CD4-positive, alpha-beta T cell (primary cell): ENCODE measurements at regions of chr6 and their contacts with region 1.

Region 1: GRCh38 chr6:118800394-118801071 is 93.4 kb upstream of the ASF1A start:
- DNase-seq: peak; percentile 66 to 94 (median 78)
- ATAC-seq: peak; percentile 92
- H3K4me3 ChIP-seq: peak overlapping the region; percentile 11
- H3K4me3 Mint-ChIP-seq: peak overlapping the region; percentile 71
- H3K27ac ChIP-seq: peak overlapping the region; percentile 7
- H3K27ac Mint-ChIP-seq: peak overlapping the region; percentile 83
- H3K4me1 ChIP-seq: peaks cover 32% of the 10 kb centered on the region
- H3K4me1 Mint-ChIP-seq: peaks cover 48% of the 10 kb centered on the region
- H3K27me3 ChIP-seq: no peaks in the 10 kb centered on the region
- H3K27me3 Mint-ChIP-seq: no peaks in the 10 kb centered on the region
- CTCF ChIP-seq: peak; percentile 83

Region 2: DNA sequence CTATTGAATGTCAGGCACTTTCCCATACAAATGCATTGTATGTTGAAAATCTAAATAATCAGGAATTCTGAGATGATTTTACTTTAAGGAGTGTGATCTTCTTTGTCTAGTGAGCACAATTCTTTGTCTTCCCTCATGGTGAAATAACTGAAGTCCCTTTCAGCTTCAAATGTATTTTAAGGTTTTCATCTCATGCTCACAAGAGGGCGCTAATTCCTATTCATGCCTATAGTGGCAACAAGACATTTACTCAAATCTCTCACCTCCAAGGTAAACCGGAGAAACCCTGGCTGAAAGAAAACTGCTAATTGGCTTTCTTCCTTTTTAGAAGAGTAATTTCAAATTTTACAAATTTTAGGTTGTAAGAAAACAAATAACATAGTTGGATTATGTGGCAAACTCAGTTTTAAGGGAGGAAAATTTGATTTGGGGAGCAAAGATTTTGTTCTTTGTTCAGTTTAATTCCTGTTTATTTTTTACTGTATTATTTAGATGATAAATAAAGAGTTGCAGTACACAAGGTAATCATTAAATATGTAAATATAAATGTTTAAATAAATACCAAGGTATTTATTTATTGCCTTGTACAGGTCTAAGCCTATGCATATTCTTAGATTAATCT is 824.4 kb before region 1 on chr6:
- CTCF ChIA-PET with region 1: no interaction called
- POLR2A ChIA-PET with region 1: no interaction called
- intact Hi-C with region 1: loop called in 1 of 2 experiments (anchors 10 kb)
- DNase-seq: peak in 3 of 14 experiments; percentile 44 to 52 (median 52)
- ATAC-seq: no peak
- H3K4me3 ChIP-seq: no peak overlapping the region
- H3K4me3 Mint-ChIP-seq: no peak overlapping the region
- H3K27ac ChIP-seq: no peak overlapping the region
- H3K27ac Mint-ChIP-seq: no peak overlapping the region
- H3K4me1 ChIP-seq: no peaks in the 10 kb centered on the region
- H3K4me1 Mint-ChIP-seq: no peaks in the 10 kb centered on the region
- H3K27me3 ChIP-seq: no peaks in the 10 kb centered on the region
- H3K27me3 Mint-ChIP-seq: peaks cover 19% of the 10 kb centered on the region
- CTCF ChIP-seq: peak; percentile 71

Region 3: DNA sequence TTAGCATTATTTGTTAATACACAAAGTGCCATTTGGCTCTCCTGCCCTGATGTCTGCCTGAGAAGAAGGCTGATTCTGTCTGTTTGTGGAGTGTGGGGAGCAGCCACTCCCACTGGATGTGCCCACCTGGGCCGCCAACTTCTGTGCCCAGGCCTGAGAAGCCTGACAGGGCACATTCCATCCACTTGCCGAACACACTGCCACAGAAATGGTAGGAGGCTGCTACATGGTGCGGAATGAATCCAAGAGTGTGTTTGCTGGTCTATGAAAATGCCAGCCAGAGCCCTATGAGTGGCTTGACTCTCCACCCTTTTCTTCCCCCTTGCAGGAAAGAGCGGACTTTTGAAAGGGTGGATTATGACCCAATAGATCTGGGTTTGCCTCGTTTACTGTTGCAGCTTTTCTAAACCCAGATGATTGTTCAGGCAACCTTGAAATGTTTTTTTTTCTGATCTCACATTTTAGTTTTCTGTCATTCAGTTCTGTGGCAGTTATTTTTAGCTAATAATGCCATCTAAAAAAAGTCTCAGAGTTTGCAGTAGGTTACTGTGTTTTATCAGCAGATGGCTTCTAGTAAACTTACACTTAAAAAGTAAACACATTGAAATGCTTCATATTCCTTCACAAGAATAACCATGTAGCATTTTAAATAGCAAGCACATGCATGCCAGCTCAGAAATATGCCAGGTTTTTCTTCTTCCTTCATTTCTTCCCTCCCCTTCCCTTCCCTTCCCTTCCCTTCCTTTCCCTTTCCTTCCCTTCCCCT is 697.0 kb before region 1 on chr6:
- CTCF ChIA-PET with region 1: no interaction called
- POLR2A ChIA-PET with region 1: no interaction called
- intact Hi-C with region 1: no loop called
- DNase-seq: no peak
- ATAC-seq: no peak
- H3K4me3 ChIP-seq: no peak overlapping the region
- H3K4me3 Mint-ChIP-seq: no peak overlapping the region
- H3K27ac ChIP-seq: no peak overlapping the region
- H3K27ac Mint-ChIP-seq: no peak overlapping the region
- H3K4me1 ChIP-seq: no peaks in the 10 kb centered on the region
- H3K4me1 Mint-ChIP-seq: no peaks in the 10 kb centered on the region
- H3K27me3 ChIP-seq: no peaks in the 10 kb centered on the region
- H3K27me3 Mint-ChIP-seq: no peaks in the 10 kb centered on the region
- CTCF ChIP-seq: no peak

Region 4: DNA sequence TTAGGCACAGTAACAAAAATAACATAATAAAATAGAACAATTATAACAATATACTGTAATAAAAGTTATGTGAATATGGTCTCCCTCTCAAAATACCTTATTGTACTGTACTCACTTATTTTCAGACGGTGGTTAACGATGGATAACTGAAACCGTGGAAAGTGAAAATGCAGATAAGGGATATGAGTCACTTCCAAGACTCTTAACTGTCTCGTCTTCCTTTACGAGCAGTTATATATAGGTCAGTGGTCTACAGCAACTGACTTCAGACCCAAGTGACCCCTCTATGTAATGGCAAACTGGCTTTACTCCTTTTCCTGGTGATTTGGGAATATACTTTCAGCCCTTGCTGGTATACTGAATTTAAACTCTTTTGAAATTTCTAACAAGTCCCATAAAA is 632.1 kb before region 1 on chr6:
- CTCF ChIA-PET with region 1: no interaction called
- POLR2A ChIA-PET with region 1: no interaction called
- intact Hi-C with region 1: no loop called
- DNase-seq: no peak
- ATAC-seq: no peak
- H3K4me3 ChIP-seq: no peak overlapping the region
- H3K4me3 Mint-ChIP-seq: no peak overlapping the region
- H3K27ac ChIP-seq: no peak overlapping the region
- H3K27ac Mint-ChIP-seq: no peak overlapping the region
- H3K4me1 ChIP-seq: no peaks in the 10 kb centered on the region
- H3K4me1 Mint-ChIP-seq: no peaks in the 10 kb centered on the region
- H3K27me3 ChIP-seq: peaks cover 0 to 3% of the 10 kb centered on the region in 2 experiments
- H3K27me3 Mint-ChIP-seq: peaks cover 27% of the 10 kb centered on the region
- CTCF ChIP-seq: no peak

Region 5: GRCh38 chr6:118283766-118284165 is 516.8 kb before region 1 on chr6:
- CTCF ChIA-PET with region 1: no interaction called
- POLR2A ChIA-PET with region 1: no interaction called
- intact Hi-C with region 1: loop called (anchors 1 to 5 kb)
- DNase-seq: peak in 13 of 14 experiments; percentile 9 to 74 (median 38)
- ATAC-seq: peak; percentile 59
- H3K4me3 ChIP-seq: no peak overlapping the region
- H3K4me3 Mint-ChIP-seq: no peak overlapping the region
- H3K27ac ChIP-seq: no peak overlapping the region
- H3K27ac Mint-ChIP-seq: no peak overlapping the region
- H3K4me1 ChIP-seq: no peaks in the 10 kb centered on the region
- H3K4me1 Mint-ChIP-seq: no peaks in the 10 kb centered on the region
- H3K27me3 ChIP-seq: no peaks in the 10 kb centered on the region
- H3K27me3 Mint-ChIP-seq: peaks cover 11% of the 10 kb centered on the region
- CTCF ChIP-seq: peak; percentile 67

Region 6: DNA sequence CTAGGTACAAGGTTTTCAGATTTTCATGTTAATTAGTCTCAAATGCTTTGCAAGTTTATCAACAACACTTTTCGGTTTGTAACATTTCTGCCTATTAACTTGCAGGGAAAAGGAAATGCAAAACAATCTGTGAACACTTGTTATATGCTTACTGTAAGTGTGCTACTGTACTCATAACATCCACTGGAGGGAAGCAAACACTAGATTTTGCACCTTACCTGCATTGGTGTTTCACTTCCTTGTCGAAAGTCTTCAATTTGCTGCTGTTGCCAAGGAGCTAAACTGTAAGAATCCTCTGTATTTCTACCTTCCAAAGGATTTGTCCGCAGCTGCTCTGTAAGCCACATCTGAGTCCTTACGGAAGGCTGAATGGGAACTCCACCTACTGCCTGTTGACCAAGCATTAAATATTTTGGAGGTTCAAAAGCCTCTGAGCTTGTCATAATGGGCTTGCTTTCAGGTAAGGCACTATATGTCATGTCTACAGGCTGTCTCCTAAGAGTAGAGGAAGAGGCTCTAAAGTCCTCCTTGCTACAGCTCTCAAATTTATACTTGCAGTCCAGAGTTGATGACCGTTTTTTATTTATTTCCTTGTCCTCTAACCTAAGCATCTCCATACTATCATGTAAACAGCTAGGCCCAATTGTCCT is 235.1 kb before region 1 on chr6:
- CTCF ChIA-PET with region 1: interaction called, 10 read pairs
- POLR2A ChIA-PET with region 1: interaction called, 8 read pairs
- intact Hi-C with region 1: loop called (anchors 1 to 2 kb)
- DNase-seq: peak in 5 of 14 experiments; percentile 22 to 81 (median 75)
- ATAC-seq: peak; percentile 97
- H3K4me3 ChIP-seq: no peak overlapping the region
- H3K4me3 Mint-ChIP-seq: no peak overlapping the region
- H3K27ac ChIP-seq: peak overlapping the region in 1 of 2 donors; percentile 5
- H3K27ac Mint-ChIP-seq: peak overlapping the region; percentile 72
- H3K4me1 ChIP-seq: peaks cover 7% of the 10 kb centered on the region
- H3K4me1 Mint-ChIP-seq: peaks cover 43% of the 10 kb centered on the region
- H3K27me3 ChIP-seq: no peaks in the 10 kb centered on the region
- H3K27me3 Mint-ChIP-seq: no peaks in the 10 kb centered on the region
- CTCF ChIP-seq: peak; percentile 63

Region 7: GRCh38 chr6:118651282-118652050 is 149.1 kb before region 1 on chr6 and contains the start of gene CEP85L:
- CTCF ChIA-PET with region 1: interaction called, 4 read pairs
- POLR2A ChIA-PET with region 1: interaction called, 5 read pairs
- intact Hi-C with region 1: loop called in 1 of 2 experiments (anchors 5 kb)
- DNase-seq: peak; percentile 83 to 96 (median 90)
- ATAC-seq: peak; percentile 90
- H3K4me3 ChIP-seq: peak within 1 kb of the TSS; percentile 82
- H3K4me3 Mint-ChIP-seq: peak within 1 kb of the TSS; percentile 91
- H3K27ac ChIP-seq: peak within 1 kb of the TSS; percentile 78 to 87
- H3K27ac Mint-ChIP-seq: peak within 1 kb of the TSS; percentile 91
- H3K4me1 ChIP-seq: peaks cover 35% of the 10 kb centered on the region
- H3K4me1 Mint-ChIP-seq: peaks cover 59% of the 10 kb centered on the region
- H3K27me3 ChIP-seq: no peaks in the 10 kb centered on the region
- H3K27me3 Mint-ChIP-seq: no peaks in the 10 kb centered on the region
- CTCF ChIP-seq: no peak
- total RNA-seq, gene CEP85L: 76.2 to 80.7 TPM

Region 8: GRCh38 chr6:118787724-118788423 is 12.7 kb before region 1 on chr6:
- CTCF ChIA-PET with region 1: interaction called, 8 read pairs
- POLR2A ChIA-PET with region 1: interaction called, 12 read pairs
- intact Hi-C with region 1: no loop called
- DNase-seq: peak in 5 of 14 experiments; percentile 10 to 74 (median 54)
- ATAC-seq: peak; percentile 92
- H3K4me3 ChIP-seq: no peak overlapping the region
- H3K4me3 Mint-ChIP-seq: peak overlapping the region; percentile 5
- H3K27ac ChIP-seq: peak overlapping the region in 1 of 2 donors; percentile 31
- H3K27ac Mint-ChIP-seq: peak overlapping the region; percentile 79
- H3K4me1 ChIP-seq: peaks cover 24% of the 10 kb centered on the region
- H3K4me1 Mint-ChIP-seq: peaks cover 16% of the 10 kb centered on the region
- H3K27me3 ChIP-seq: no peaks in the 10 kb centered on the region
- H3K27me3 Mint-ChIP-seq: no peaks in the 10 kb centered on the region
- CTCF ChIP-seq: no peak

Region 9: DNA sequence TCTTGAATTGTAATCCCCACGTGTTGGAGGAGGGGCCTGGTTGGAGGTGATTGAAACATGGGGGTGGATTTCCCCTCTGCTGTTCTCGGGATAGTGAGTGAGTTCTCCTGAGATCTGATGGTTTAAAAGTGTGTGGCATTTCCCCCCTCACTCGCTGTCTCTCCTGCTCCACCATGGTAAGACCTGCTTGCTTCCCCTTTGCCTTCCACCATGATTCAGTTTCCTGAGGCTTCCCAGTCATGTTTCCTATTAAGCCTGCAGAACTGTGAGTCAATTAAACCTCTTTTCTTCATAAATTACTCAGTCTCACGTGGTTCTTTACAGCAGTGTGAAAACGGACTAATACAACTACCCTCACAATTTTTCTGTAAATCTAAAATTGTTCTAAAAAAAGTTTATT is 304.7 kb after region 1 on chr6:
- CTCF ChIA-PET with region 1: no interaction called
- POLR2A ChIA-PET with region 1: interaction called, 3 read pairs
- intact Hi-C with region 1: loop called in 1 of 2 experiments (anchors 5 kb)
- DNase-seq: no peak
- ATAC-seq: no peak
- H3K4me3 ChIP-seq: no peak overlapping the region
- H3K4me3 Mint-ChIP-seq: no peak overlapping the region
- H3K27ac ChIP-seq: no peak overlapping the region
- H3K27ac Mint-ChIP-seq: no peak overlapping the region
- H3K4me1 ChIP-seq: peaks cover 5% of the 10 kb centered on the region
- H3K4me1 Mint-ChIP-seq: peaks cover 7% of the 10 kb centered on the region
- H3K27me3 ChIP-seq: no peaks in the 10 kb centered on the region
- H3K27me3 Mint-ChIP-seq: no peaks in the 10 kb centered on the region
- CTCF ChIP-seq: no peak